ENCODE measurements at regions of chr4 and their contacts with region 1.

Region 1: GRCh38 chr4:88211473-88212252 is 53.2 kb upstream of the ABCG2 start:
- DNase-seq: peak; percentile 34 to 62 (median 43)
- H3K4me3 ChIP-seq: no peak overlapping the region
- H3K4me3 Mint-ChIP-seq: no peak overlapping the region
- H3K27ac ChIP-seq: no peak overlapping the region
- H3K27ac Mint-ChIP-seq: no peak overlapping the region
- H3K4me1 ChIP-seq: no peaks in the 10 kb centered on the region
- H3K4me1 Mint-ChIP-seq: peaks cover 6% of the 10 kb centered on the region
- H3K27me3 ChIP-seq: no peaks in the 10 kb centered on the region
- H3K27me3 Mint-ChIP-seq: peaks cover 0 to 4% (median 0%) of the 10 kb centered on the region in 3 donors
- CTCF ChIP-seq: peak; percentile 83

Region 2: DNA sequence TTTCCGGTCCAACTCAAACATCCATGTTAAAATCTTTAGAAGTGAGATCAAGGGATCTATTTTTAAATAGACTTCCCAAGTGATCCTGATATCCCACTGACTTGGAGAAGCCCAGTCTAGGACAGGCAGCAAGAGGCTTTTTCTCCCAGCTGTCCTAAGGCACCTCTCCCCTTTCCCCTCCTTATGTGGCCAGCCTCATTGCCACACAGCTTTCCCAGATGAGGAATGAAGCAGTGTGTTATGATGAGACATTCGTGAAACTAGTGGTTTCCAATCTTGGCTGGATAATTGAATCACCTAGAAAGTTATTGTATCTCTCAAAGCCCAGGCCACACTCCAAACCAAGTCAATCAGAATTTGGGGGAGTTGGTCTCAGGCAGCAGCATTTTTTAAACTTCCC is 872.2 kb before region 1 on chr4:
- intact Hi-C with region 1: no loop called
- DNase-seq: no peak
- H3K4me3 ChIP-seq: no peak overlapping the region
- H3K4me3 Mint-ChIP-seq: no peak overlapping the region
- H3K27ac ChIP-seq: no peak overlapping the region
- H3K27ac Mint-ChIP-seq: peak overlapping the region in 1 of 7 donors; percentile 70
- H3K4me1 ChIP-seq: no peaks in the 10 kb centered on the region
- H3K4me1 Mint-ChIP-seq: no peaks in the 10 kb centered on the region
- H3K27me3 ChIP-seq: no peaks in the 10 kb centered on the region
- H3K27me3 Mint-ChIP-seq: no peaks in the 10 kb centered on the region
- CTCF ChIP-seq: no peak

Region 3: GRCh38 chr4:87865960-87866598 is 345.6 kb before region 1 on chr4:
- intact Hi-C with region 1: loop called in 1 of 2 experiments (anchors 10 kb)
- DNase-seq: no peak
- H3K4me3 ChIP-seq: no peak overlapping the region
- H3K4me3 Mint-ChIP-seq: no peak overlapping the region
- H3K27ac ChIP-seq: no peak overlapping the region
- H3K27ac Mint-ChIP-seq: no peak overlapping the region
- H3K4me1 ChIP-seq: peaks cover 14 to 16% of the 10 kb centered on the region in 2 donors
- H3K4me1 Mint-ChIP-seq: peaks cover 16% of the 10 kb centered on the region
- H3K27me3 ChIP-seq: no peaks in the 10 kb centered on the region
- H3K27me3 Mint-ChIP-seq: peaks cover 0 to 5% (median 3%) of the 10 kb centered on the region in 3 donors
- CTCF ChIP-seq: no peak

Region 4: GRCh38 chr4:88033309-88033708 is 178.4 kb before region 1 on chr4:
- intact Hi-C with region 1: loop called (anchors 5 kb)
- DNase-seq: peak; percentile 40 to 57 (median 55)
- H3K4me3 ChIP-seq: no peak overlapping the region
- H3K4me3 Mint-ChIP-seq: no peak overlapping the region
- H3K27ac ChIP-seq: no peak overlapping the region
- H3K27ac Mint-ChIP-seq: no peak overlapping the region
- H3K4me1 ChIP-seq: peaks cover 0 to 6% of the 10 kb centered on the region in 2 donors
- H3K4me1 Mint-ChIP-seq: peaks cover 14% of the 10 kb centered on the region
- H3K27me3 ChIP-seq: no peaks in the 10 kb centered on the region
- H3K27me3 Mint-ChIP-seq: peaks cover 0 to 3% (median 1%) of the 10 kb centered on the region in 3 donors
- CTCF ChIP-seq: peak; percentile 71

Region 5: GRCh38 chr4:88244816-88245579 is 33.3 kb after region 1 on chr4:
- intact Hi-C with region 1: no loop called
- DNase-seq: no peak
- H3K4me3 ChIP-seq: peak overlapping the region in 1 of 3 experiments; percentile 35
- H3K4me3 Mint-ChIP-seq: peak overlapping the region; percentile 67 to 73
- H3K27ac ChIP-seq: no peak overlapping the region
- H3K27ac Mint-ChIP-seq: peak overlapping the region in 3 of 7 donors; percentile 30 to 66 (median 64)
- H3K4me1 ChIP-seq: peaks cover 0 to 4% of the 10 kb centered on the region in 2 donors
- H3K4me1 Mint-ChIP-seq: peaks cover 13% of the 10 kb centered on the region
- H3K27me3 ChIP-seq: no peaks in the 10 kb centered on the region
- H3K27me3 Mint-ChIP-seq: peaks cover 0 to 2% (median 0%) of the 10 kb centered on the region in 3 donors
- CTCF ChIP-seq: no peak

Measured in CD14-positive monocyte (primary cell).